ENCODE measurements at regions of chr11 and their contacts with region 1.

Region 1: GRCh38 chr11:126480410-126481302 is 125.2 kb downstream of the ST3GAL4 start:
- DNase-seq: peak; percentile 82
- ATAC-seq: peak; percentile 77
- H3K4me3 Mint-ChIP-seq: peak overlapping the region; percentile 26
- H3K27ac Mint-ChIP-seq: peak overlapping the region; percentile 82
- H3K4me1 Mint-ChIP-seq: peaks cover 22% of the 10 kb centered on the region
- H3K27me3 Mint-ChIP-seq: peaks cover 4% of the 10 kb centered on the region

Region 2: DNA sequence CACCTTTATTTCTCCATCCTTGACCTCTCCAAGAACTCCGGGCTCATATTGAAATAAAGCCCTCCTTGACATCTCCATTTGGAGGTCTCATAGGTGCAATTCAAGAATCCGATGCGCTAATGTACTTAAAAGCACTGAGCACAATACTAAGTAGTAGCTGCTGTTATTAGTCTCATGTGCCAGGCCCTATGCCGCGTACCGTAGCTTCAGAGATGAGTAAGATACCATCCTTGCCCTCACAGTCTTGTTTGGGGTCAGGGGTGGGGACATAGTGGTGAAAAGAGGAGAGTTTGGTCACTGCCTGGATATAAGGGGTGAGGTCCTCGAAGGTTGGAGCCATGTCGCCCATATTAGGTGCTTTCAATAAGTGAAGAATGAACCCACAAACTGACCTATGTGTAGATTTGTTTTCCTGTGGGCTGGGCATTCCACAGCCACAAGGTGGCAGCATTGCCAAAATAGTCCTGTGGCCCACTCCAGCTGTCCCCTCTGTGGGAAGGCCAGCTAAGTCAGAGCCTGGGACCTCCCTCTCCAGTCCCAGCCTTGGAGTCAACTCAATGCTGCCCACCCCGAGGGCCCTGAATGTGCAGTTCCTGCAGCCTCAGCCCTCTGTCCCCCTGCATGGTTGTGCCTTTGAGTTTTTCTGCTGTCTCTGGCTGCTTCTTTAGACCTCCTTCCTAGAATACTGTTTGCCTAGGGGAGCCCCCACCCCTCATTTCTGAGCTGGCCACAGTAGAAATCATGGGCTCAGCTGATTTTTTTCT is 170.2 kb before region 1 on chr11:
- CTCF ChIA-PET with region 1: interaction called, 80 read pairs
- POLR2A ChIA-PET with region 1: no interaction called
- DNase-seq: peak; percentile 70
- ATAC-seq: peak; percentile 84
- H3K4me3 Mint-ChIP-seq: no peak overlapping the region
- H3K27ac Mint-ChIP-seq: no peak overlapping the region
- H3K4me1 Mint-ChIP-seq: peaks cover 31% of the 10 kb centered on the region
- H3K27me3 Mint-ChIP-seq: no peaks in the 10 kb centered on the region

Region 3: GRCh38 chr11:126355324-126355925 is 125.2 kb before region 1 on chr11 and contains the start of gene ST3GAL4:
- CTCF ChIA-PET with region 1: interaction called, 10 read pairs
- POLR2A ChIA-PET with region 1: no interaction called
- DNase-seq: peak; percentile 78
- ATAC-seq: peak; percentile 79
- H3K4me3 Mint-ChIP-seq: peak within 1 kb of the TSS; percentile 94
- H3K27ac Mint-ChIP-seq: peak within 1 kb of the TSS; percentile 90
- H3K4me1 Mint-ChIP-seq: peaks cover 51% of the 10 kb centered on the region
- H3K27me3 Mint-ChIP-seq: no peaks in the 10 kb centered on the region
- total RNA-seq, gene ST3GAL4: 10.3 to 11.8 TPM

Region 4: DNA sequence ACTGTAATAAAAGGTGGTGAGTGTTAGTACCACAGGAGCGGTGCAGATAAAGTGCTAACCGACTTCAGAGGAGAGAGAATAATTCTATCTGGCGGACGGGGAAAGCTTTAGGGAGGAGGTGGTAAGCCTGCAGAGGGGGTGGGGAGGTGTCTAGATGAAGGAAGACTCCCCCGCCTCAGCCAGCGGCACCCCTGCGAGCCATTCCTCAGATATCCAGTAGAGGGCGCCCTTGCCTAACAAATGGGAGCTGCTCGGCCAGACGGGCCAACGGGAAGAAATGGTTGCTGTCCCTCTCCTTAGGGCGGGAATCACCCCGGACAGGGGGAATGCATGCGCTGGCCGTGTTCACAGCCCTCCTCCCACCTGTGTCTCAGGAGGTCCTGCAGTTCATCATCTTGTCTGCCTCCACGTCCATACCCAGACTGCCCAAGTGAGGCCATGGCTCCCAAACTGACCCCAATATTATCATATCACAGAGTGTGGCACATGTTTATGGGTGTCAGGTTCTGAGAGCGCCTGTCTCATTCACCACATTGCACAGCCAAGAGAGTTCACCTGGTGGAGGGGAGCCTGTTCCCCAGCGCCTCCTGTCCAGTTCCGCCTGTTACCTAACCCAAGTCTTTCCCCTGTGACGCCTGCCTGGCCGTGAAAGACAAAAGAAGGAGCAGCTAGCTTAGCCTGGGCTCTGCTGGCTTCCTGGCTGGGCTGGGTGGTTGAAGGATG is 39.7 kb before region 1 on chr11:
- CTCF ChIA-PET with region 1: interaction called, 175 read pairs
- POLR2A ChIA-PET with region 1: interaction called, 3 read pairs
- DNase-seq: peak; percentile 79
- ATAC-seq: peak; percentile 82
- H3K4me3 Mint-ChIP-seq: no peak overlapping the region
- H3K27ac Mint-ChIP-seq: no peak overlapping the region
- H3K4me1 Mint-ChIP-seq: peaks cover 13% of the 10 kb centered on the region
- H3K27me3 Mint-ChIP-seq: peaks cover 15% of the 10 kb centered on the region

Region 5: GRCh38 chr11:126465573-126466188 is 15.0 kb before region 1 on chr11:
- CTCF ChIA-PET with region 1: interaction called, 84 read pairs
- POLR2A ChIA-PET with region 1: interaction called, 10 read pairs
- DNase-seq: peak; percentile 67
- ATAC-seq: peak; percentile 82
- H3K4me3 Mint-ChIP-seq: peak overlapping the region; percentile 13
- H3K27ac Mint-ChIP-seq: peak overlapping the region; percentile 84
- H3K4me1 Mint-ChIP-seq: peaks cover 32% of the 10 kb centered on the region
- H3K27me3 Mint-ChIP-seq: no peaks in the 10 kb centered on the region

Region 6: DNA sequence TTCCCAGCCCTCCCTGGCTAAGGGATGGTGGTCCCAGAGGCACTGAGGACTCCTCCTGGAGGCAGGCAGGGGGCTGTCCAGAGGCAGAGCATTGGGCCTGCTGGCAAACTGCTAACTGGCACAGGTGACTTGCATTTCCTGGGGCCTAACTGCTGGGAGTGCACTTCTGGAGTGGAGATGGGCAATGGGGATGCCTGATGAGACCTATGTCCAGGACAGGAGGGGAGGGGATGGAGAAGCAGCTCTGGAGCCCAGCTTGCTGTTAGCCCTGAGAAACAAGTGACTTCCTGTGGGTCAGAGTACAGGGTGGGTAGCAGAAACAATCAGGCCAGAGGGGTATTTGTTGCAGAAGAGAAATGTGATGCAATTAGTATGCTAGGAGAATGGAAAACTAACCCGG is 128.0 kb after region 1 on chr11:
- CTCF ChIA-PET with region 1: no interaction called
- POLR2A ChIA-PET with region 1: no interaction called
- DNase-seq: no peak
- ATAC-seq: no peak
- H3K4me3 Mint-ChIP-seq: no peak overlapping the region
- H3K27ac Mint-ChIP-seq: no peak overlapping the region
- H3K4me1 Mint-ChIP-seq: no peaks in the 10 kb centered on the region
- H3K27me3 Mint-ChIP-seq: peaks cover 3% of the 10 kb centered on the region

Measured in activated CD8-positive, alpha-beta T cell treated with anti-CD3 and anti-CD28 coated beads, Interleukin-2, amount 10 ng/mL, durations not matched to agents 7 days and 5 days (primary cell).